ENCODE measurements at regions of chr6 and their contacts with region 1.

Region 1: DNA sequence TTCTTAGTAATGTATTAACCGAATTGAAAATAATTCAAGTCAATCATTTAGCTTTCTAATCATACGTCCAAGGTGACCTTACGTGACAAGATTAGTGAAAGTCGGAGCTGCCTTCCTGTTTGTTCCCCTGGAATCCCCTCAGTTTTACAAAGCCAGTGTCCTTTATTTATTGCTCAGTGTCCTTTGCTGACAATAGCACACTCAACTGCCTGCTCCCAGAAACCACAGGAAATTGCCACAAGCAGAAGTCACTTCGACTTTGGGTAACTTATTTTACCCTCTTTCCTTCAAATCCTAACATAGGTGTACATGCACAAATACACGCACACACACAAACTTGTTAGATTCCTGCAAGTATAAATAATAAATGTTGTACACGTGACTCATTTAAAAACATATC is 1167.7 kb upstream of the ADGRB3 start:
- DNase-seq: no peak
- H3K4me3 ChIP-seq: no peak overlapping the region
- H3K27ac ChIP-seq: no peak overlapping the region
- H3K4me1 ChIP-seq: no peaks in the 10 kb centered on the region
- H3K27me3 ChIP-seq: no peaks in the 10 kb centered on the region
- CTCF ChIP-seq: no peak
- POLR2A ChIP-seq: no peak

Region 2: DNA sequence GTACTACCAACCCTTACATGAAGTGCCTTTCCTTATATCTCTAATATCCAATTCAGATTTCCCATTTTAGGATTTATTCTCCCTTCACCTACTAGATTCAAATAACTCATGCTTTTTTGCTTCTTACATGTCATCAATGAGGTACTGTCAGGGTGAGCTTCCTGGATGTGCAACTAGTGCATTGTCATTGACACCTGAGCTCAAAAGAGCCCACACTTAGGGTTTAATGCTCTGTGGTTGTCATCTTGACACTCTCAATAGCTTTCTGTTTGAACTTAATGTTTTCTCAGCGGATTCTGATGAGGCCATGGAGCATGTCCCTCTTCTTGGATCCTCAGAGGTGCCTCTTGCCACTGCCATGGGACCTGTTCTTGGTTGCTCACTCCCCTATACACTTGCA is 727.0 kb before region 1 on chr6:
- intact Hi-C with region 1: loop called (anchors 5 kb)
- DNase-seq: no peak
- H3K4me3 ChIP-seq: no peak overlapping the region
- H3K27ac ChIP-seq: no peak overlapping the region
- H3K4me1 ChIP-seq: no peaks in the 10 kb centered on the region
- H3K27me3 ChIP-seq: no peaks in the 10 kb centered on the region
- CTCF ChIP-seq: no peak
- POLR2A ChIP-seq: no peak

Region 3: GRCh38 chr6:67449602-67450001 is 17.7 kb before region 1 on chr6:
- intact Hi-C with region 1: no loop called
- DNase-seq: no peak
- H3K4me3 ChIP-seq: no peak overlapping the region
- H3K27ac ChIP-seq: no peak overlapping the region
- H3K4me1 ChIP-seq: no peaks in the 10 kb centered on the region
- H3K27me3 ChIP-seq: no peaks in the 10 kb centered on the region
- CTCF ChIP-seq: no peak
- POLR2A ChIP-seq: no peak

Measured in vagina (tissue), 2 donors.